ENCODE measurements at regions of chr2 and their contacts with region 1.

Region 1: DNA sequence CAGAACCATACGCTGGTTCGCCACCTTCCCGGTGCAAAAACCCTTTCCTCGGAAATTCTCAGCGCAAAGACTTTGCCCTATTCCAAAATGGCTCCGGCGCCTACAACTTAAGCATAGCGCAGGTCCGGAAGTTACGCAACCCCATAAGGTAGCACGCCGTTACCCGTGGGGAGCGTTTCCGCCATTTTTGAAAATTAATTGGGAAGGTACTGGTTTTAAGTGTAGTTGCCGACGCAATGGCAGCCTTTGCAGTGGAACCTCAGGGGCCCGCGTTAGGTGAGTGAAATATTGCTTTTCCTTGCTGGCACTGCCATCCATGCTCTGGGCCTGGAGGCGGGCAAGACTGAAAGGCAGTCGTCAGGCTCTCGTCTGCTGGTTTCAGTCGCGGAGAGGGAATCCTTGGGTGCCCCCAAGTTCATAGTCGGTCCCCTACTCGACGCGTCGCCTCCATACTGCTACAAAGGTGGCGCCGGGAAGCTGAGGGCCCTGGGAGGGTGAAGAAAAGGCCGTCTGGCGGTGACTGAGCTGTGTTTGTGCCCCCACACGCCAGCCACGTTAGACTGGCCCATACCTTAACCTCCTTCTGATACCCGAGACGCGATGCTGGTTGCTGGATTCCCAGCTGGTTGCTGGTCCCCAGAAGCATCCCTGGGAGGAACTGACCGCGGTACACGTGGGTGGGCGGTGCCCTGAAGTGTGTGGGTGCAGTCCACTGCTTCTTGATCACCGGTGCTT is at the start of gene NUP35:
- DNase-seq: peak; percentile 79 to 92
- ATAC-seq: peak; percentile 92 to 97 (median 96)
- H3K4me3 ChIP-seq: peak within 1 kb of the TSS; percentile 82
- H3K4me3 Mint-ChIP-seq: peak within 1 kb of the TSS; percentile 95
- H3K27ac ChIP-seq: peak within 1 kb of the TSS; percentile 86
- H3K27ac Mint-ChIP-seq: peak within 1 kb of the TSS; percentile 90 to 91
- H3K4me1 ChIP-seq: peaks cover 11% of the 10 kb centered on the region
- H3K4me1 Mint-ChIP-seq: peaks cover 15 to 26% of the 10 kb centered on the region in 2 donors
- H3K27me3 ChIP-seq: no peaks in the 10 kb centered on the region
- H3K27me3 Mint-ChIP-seq: peaks cover 18 to 36% of the 10 kb centered on the region in 2 donors
- CTCF ChIP-seq: no peak
- total RNA-seq, gene NUP35: 10.5 to 14.0 (median 12.7) TPM

Region 2: DNA sequence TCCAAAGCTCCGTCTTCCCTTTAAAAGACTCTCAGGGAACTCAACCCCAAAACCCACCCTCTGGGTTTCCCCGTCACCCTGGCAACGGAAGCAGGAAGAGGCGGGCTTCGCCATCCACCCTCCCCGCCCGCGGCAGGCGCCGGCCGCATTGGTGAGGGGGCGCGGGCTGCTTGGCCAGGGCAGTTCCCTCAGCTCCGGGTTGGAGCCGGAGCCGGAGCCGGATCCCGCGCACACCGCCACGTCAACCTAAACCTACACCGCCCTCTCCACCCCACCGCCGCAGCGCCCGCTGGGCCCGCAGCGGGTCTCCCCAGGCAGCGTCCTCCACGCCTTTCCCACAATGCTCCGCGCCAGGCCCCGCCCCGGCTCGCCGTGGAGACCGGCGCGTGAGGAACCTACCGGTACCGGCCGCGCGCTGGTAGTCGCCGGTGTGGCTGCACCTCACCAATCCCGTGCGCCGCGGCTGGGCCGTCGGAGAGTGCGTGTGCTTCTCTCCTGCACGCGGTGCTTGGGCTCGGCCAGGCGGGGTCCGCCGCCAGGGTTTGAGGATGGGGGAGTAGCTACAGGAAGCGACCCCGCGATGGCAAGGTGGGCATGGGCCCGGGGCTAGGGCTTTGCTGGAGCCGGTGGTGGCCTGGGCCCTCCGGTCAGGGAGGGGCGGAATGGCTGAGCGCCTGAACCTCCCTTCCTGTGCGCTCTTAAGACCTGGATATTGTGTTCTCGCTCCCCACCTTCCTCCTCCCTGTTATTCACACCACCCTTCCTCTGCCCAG is 408.3 kb before region 1 on chr2 and contains the start of gene DNAJC10:
- intact Hi-C with region 1: loop called (anchors 5 kb)
- DNase-seq: peak; percentile 79 to 93
- ATAC-seq: peak; percentile 87 to 94 (median 89)
- H3K4me3 ChIP-seq: peak within 1 kb of the TSS; percentile 63
- H3K4me3 Mint-ChIP-seq: no peak within 1 kb of the TSS
- H3K27ac ChIP-seq: peak within 1 kb of the TSS; percentile 73
- H3K27ac Mint-ChIP-seq: no peak within 1 kb of the TSS
- H3K4me1 ChIP-seq: peaks cover 7% of the 10 kb centered on the region
- H3K4me1 Mint-ChIP-seq: no peaks in the 10 kb centered on the region
- H3K27me3 ChIP-seq: no peaks in the 10 kb centered on the region
- H3K27me3 Mint-ChIP-seq: peaks cover 6 to 13% of the 10 kb centered on the region in 2 donors
- CTCF ChIP-seq: no peak
- total RNA-seq, gene DNAJC10: 56.4 to 63.0 (median 60.6) TPM

Region 3: GRCh38 chr2:183038341-183039300 is 85.8 kb before region 1 on chr2 and contains the start of gene NCKAP1:
- intact Hi-C with region 1: loop called (anchors 1 kb)
- DNase-seq: peak; percentile 87 to 88
- ATAC-seq: peak; percentile 86 to 94 (median 87)
- H3K4me3 ChIP-seq: peak within 1 kb of the TSS; percentile 55
- H3K4me3 Mint-ChIP-seq: peak within 1 kb of the TSS; percentile 84
- H3K27ac ChIP-seq: no peak within 1 kb of the TSS
- H3K27ac Mint-ChIP-seq: peak within 1 kb of the TSS; percentile 71 to 87
- H3K4me1 ChIP-seq: peaks cover 11% of the 10 kb centered on the region
- H3K4me1 Mint-ChIP-seq: peaks cover 31 to 32% of the 10 kb centered on the region in 2 donors
- H3K27me3 ChIP-seq: peaks cover 37% of the 10 kb centered on the region
- H3K27me3 Mint-ChIP-seq: peaks cover 39 to 72% of the 10 kb centered on the region in 2 donors
- CTCF ChIP-seq: peak; percentile 85
- total RNA-seq, gene NCKAP1: 8.4 to 12.3 (median 10.4) TPM

Region 4: DNA sequence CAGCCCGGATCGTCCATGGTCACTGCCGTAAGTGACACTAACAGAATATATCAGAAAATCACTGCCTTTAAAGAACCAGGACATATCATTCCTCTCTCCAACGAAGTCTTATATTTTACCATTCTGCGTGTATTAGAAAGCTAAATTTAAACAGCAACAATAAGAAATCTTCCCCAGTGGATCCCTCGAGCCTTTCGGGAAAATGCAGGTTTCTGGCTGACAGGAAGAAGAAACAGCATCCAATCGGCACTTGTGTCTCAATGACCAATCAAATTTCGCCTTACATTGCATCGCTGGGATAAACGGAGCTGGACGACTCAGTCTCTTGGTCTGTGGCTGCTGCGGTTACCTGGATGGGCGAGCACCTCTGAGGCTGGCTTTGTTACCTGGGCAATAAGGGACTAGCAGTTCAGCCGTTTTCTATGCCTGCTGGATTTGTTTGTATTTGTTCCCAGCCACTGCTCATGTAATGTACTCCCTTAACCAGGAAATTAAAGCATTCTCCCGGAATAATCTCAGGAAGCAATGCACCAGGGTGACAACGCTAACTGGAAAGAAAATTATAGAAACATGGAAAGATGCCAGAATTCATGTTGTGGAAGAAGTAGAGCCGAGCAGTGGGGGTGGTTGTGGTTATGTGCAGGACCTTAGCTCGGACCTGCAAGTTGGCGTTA is 45.8 kb before region 1 on chr2 and contains the start of gene DUSP19:
- intact Hi-C with region 1: loop called (anchors 1 kb)
- DNase-seq: peak; percentile 78 to 89
- ATAC-seq: peak; percentile 75 to 89 (median 84)
- H3K4me3 ChIP-seq: peak within 1 kb of the TSS; percentile 70
- H3K4me3 Mint-ChIP-seq: peak within 1 kb of the TSS; percentile 96
- H3K27ac ChIP-seq: no peak within 1 kb of the TSS
- H3K27ac Mint-ChIP-seq: peak within 1 kb of the TSS; percentile 75 to 83
- H3K4me1 ChIP-seq: peaks cover 5% of the 10 kb centered on the region
- H3K4me1 Mint-ChIP-seq: peaks cover 14 to 15% of the 10 kb centered on the region in 2 donors
- H3K27me3 ChIP-seq: peaks cover 4% of the 10 kb centered on the region
- H3K27me3 Mint-ChIP-seq: no peaks in the 10 kb centered on the region
- CTCF ChIP-seq: no peak
- total RNA-seq, gene DUSP19: 1.0 to 1.1 (median 1.1) TPM

Region 5: GRCh38 chr2:183359867-183360266 is 235.5 kb after region 1 on chr2:
- intact Hi-C with region 1: no loop called
- DNase-seq: no peak
- ATAC-seq: no peak
- H3K4me3 ChIP-seq: no peak overlapping the region
- H3K4me3 Mint-ChIP-seq: no peak overlapping the region
- H3K27ac ChIP-seq: no peak overlapping the region
- H3K27ac Mint-ChIP-seq: no peak overlapping the region
- H3K4me1 ChIP-seq: no peaks in the 10 kb centered on the region
- H3K4me1 Mint-ChIP-seq: no peaks in the 10 kb centered on the region
- H3K27me3 ChIP-seq: no peaks in the 10 kb centered on the region
- H3K27me3 Mint-ChIP-seq: no peaks in the 10 kb centered on the region
- CTCF ChIP-seq: no peak

Measured in natural killer cell (primary cell).